Ascending aorta (tissue), 2 donors: ENCODE measurements at regions of chr13 and their contacts with region 1.

Region 1: DNA sequence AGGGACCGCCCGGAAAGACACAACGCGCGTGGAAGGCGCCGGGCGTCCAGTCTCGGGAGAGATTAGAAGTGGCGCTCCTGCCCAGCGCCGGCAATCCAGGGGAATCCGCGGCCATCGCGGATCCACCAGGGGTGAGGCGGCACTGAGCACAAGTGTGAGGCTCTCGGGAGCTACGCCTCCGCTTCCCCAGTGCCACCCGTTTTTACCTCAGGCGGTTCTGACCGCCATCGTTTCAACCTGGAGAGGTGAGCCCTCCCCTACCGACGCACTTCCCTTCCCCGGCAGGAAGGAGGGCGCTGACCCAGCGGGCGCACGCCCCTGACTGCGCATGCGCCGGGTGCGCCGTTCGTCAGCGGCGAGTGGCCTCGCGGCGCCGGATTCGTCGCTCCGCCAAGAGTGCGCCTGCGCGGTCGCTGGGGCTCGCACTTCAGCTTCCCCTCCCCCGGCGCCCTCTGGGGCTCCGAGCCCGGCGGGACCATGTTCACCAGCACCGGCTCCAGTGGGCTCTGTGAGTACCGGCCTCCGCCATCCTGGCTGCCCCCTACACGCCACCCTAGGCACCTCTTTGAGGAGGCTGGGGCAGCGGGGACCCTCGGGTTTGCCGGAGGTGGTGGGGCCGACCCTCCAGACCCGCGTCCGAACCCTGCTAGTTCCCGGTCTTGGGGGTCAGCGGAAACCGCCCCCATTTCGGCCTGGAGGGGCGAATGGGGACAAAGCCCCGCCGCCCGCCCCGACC is at the start of gene UBAC2:
- DNase-seq: peak; percentile 79 to 97
- H3K4me3 ChIP-seq: peak within 1 kb of the TSS; percentile 82 to 96
- H3K27ac ChIP-seq: peak within 1 kb of the TSS; percentile 98
- H3K4me1 ChIP-seq: peaks cover 0 to 6% of the 10 kb centered on the region in 2 donors
- H3K27me3 ChIP-seq: no peaks in the 10 kb centered on the region
- CTCF ChIP-seq: no peak
- total RNA-seq, gene UBAC2: 67.8 TPM

Region 2: DNA sequence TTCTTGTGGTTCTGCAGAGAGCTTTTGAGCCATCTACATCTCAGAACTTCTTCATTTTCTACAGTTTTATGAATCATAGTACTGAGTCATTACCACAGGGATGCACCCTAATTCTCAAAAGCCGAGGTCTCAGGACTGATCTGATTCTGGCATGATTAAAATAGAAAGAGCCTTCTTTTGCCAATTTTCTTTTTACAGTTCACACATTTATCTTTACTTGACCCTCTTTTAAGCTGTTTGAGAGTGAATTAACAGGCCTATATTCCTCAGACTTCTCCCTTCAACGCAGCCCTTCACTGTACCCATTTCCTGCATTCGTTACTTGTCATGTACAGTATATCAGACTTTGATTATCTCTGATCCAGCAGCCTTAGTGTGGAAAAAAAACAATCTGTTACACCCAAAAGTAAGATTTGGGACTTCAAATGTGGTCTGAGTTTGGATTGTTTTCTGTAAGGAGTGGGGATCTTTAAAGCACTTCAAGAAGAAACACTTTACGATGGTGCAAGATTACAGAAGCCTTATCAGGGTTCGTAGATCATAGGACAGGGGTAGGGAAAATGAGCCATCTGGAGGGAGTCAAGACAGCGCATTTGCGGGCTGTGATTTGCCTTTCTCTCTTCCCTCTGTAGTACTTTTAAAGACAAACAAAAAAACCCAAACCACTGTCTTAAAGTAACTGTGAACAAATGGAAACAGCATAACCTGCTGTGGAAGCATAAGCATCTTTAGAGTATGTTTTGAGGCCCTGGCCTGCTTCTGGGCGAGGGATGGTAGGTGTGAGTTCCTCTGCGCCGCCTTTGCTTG is 121.9 kb after region 1 on chr13:
- intact Hi-C with region 1: loop called (anchors 5 kb)
- DNase-seq: no peak
- H3K4me3 ChIP-seq: no peak overlapping the region
- H3K27ac ChIP-seq: peak overlapping the region; percentile 29 to 63
- H3K4me1 ChIP-seq: peaks cover 6 to 19% of the 10 kb centered on the region in 2 donors
- H3K27me3 ChIP-seq: no peaks in the 10 kb centered on the region
- CTCF ChIP-seq: no peak

Region 3: GRCh38 chr13:99436686-99437416 is 236.3 kb after region 1 on chr13:
- intact Hi-C with region 1: loop called (anchors 1 kb)
- DNase-seq: peak; percentile 33 to 93
- H3K4me3 ChIP-seq: no peak overlapping the region
- H3K27ac ChIP-seq: no peak overlapping the region
- H3K4me1 ChIP-seq: no peaks in the 10 kb centered on the region
- H3K27me3 ChIP-seq: no peaks in the 10 kb centered on the region
- CTCF ChIP-seq: peak; percentile 99 to 100 (median 99)

Region 4: DNA sequence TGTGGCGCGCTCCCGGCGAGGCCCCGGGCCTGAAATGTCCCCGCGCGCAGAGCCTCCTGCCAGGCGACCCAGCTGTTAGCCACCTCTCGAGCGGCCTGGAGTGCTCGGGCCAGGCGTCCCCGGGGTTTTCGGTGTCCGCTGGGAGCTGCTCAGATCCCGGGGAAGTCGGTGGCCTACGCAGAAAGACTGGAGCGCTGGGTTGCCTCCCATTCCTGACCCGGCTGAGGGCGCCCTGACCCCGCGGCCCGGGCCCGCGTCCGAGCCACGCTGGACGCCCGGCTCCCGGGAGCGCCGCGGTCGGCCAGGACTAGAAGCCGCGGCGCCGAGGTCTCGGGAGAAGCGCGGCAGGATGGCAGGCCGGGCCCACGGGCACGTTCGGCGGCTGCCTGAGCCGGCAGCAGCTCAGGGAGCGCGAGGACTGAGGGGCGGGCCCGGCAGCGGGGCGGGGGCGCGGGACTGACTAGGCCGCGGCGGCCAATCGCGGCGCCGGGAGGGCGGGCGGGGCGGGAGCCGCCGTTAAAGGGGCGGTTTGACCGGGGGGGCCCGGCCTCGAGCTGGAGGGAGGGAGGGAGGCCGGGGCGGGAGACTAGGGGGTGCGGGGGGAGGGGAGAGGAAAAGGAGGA is 779.7 kb after region 1 on chr13:
- intact Hi-C with region 1: loop called (anchors 10 kb)
- DNase-seq: peak in 1 of 2 donors; percentile 72
- H3K4me3 ChIP-seq: peak overlapping the region; percentile 63 to 66
- H3K27ac ChIP-seq: no peak overlapping the region
- H3K4me1 ChIP-seq: peaks cover 7 to 22% of the 10 kb centered on the region in 2 donors
- H3K27me3 ChIP-seq: peaks cover 55% of the 10 kb centered on the region
- CTCF ChIP-seq: no peak